ENCODE measurements at regions of chr21 and their contacts with region 1.

Region 1: GRCh38 chr21:27759091-27759659 is 792.3 kb upstream of the ADAMTS5 start:
- DNase-seq: peak; percentile 68
- ATAC-seq: peak; percentile 90
- H3K4me3 Mint-ChIP-seq: no peak overlapping the region
- H3K27ac Mint-ChIP-seq: peak overlapping the region; percentile 42; the same call in 1 of the 2 replicates
- H3K4me1 Mint-ChIP-seq: peaks cover 25% of the 10 kb centered on the region
- H3K27me3 Mint-ChIP-seq: no peaks in the 10 kb centered on the region
- CTCF ChIP-seq: no peak

Region 2: GRCh38 chr21:27802816-27803475 is 43.8 kb after region 1 on chr21:
- CTCF ChIA-PET with region 1: interaction called, 14 read pairs
- POLR2A ChIA-PET with region 1: no interaction called
- DNase-seq: peak; percentile 62
- ATAC-seq: peak; percentile 83
- H3K4me3 Mint-ChIP-seq: no peak overlapping the region
- H3K27ac Mint-ChIP-seq: no peak overlapping the region
- H3K4me1 Mint-ChIP-seq: no peaks in the 10 kb centered on the region
- H3K27me3 Mint-ChIP-seq: no peaks in the 10 kb centered on the region
- CTCF ChIP-seq: peak; percentile 54; the same call in 1 of the 2 replicates